Stomach (tissue), 19 donors: ENCODE measurements at regions of chr10 and their contacts with region 1.

Region 1: GRCh38 chr10:95601116-95601719 is 40.0 kb upstream of the SORBS1 start:
- DNase-seq: peak; percentile 87 to 96
- H3K4me3 ChIP-seq: no peak overlapping the region
- H3K27ac ChIP-seq: peak overlapping the region in 4 of 5 donors; percentile 15 to 88 (median 30)
- H3K4me1 ChIP-seq: peaks cover 0 to 25% (median 5%) of the 10 kb centered on the region in 4 donors
- H3K27me3 ChIP-seq: no peaks in the 10 kb centered on the region
- CTCF ChIP-seq: peak in 6 of 7 experiments; percentile 58 to 99 (median 91)
- EP300 ChIP-seq: no peak
- POLR2A ChIP-seq: no peak

Region 2: GRCh38 chr10:95419399-95419798 is 181.8 kb before region 1 on chr10:
- intact Hi-C with region 1: no loop called
- DNase-seq: no peak
- H3K4me3 ChIP-seq: no peak overlapping the region
- H3K27ac ChIP-seq: peak overlapping the region in 4 of 5 donors; percentile 50 to 95 (median 77)
- H3K4me1 ChIP-seq: peaks cover 14 to 85% (median 49%) of the 10 kb centered on the region in 4 donors
- H3K27me3 ChIP-seq: no peaks in the 10 kb centered on the region
- CTCF ChIP-seq: no peak
- EP300 ChIP-seq: no peak
- POLR2A ChIP-seq: no peak

Region 3: DNA sequence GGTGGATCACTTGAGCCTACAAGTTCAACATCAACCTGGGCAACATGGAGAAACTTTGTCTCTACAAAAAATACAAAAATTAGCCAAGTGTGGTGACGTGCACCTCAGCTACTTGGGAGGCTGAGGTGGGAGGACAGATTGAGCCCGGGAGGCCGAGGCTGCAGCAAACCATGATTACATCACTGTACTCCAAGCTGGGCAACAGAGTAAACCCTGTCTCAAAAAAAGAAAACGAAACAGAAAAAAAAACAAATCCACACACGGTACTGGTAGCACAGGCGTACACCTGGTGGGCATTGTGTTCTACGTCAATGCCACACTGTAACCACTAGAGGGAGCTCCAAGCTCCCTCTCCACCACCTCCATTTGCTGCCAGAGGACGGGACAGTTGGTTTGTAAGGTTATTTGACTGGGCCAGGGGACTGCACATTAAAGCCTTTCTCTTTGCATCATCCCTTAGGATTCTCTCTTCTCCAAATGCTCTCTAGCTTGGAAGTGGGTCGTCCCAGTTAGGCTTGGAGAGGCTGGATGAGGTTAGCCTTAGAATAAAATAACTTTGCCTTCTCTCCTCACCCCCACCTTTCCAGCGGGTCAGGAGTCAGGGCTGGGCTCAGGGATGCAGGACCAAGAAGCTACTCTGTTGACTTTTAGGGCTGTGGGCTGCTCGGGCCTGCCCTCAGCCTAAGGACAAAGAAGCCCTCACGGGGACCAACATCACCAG is 170.8 kb before region 1 on chr10:
- intact Hi-C with region 1: loop called (anchors 5 kb)
- DNase-seq: peak; percentile 65 to 88
- H3K4me3 ChIP-seq: no peak overlapping the region
- H3K27ac ChIP-seq: peak overlapping the region in 4 of 5 donors; percentile 47 to 95 (median 66)
- H3K4me1 ChIP-seq: peaks cover 38 to 95% (median 74%) of the 10 kb centered on the region in 4 donors
- H3K27me3 ChIP-seq: no peaks in the 10 kb centered on the region
- CTCF ChIP-seq: peak in 6 of 7 experiments; percentile 90 to 99 (median 92)
- EP300 ChIP-seq: no peak
- POLR2A ChIP-seq: no peak

Region 4: DNA sequence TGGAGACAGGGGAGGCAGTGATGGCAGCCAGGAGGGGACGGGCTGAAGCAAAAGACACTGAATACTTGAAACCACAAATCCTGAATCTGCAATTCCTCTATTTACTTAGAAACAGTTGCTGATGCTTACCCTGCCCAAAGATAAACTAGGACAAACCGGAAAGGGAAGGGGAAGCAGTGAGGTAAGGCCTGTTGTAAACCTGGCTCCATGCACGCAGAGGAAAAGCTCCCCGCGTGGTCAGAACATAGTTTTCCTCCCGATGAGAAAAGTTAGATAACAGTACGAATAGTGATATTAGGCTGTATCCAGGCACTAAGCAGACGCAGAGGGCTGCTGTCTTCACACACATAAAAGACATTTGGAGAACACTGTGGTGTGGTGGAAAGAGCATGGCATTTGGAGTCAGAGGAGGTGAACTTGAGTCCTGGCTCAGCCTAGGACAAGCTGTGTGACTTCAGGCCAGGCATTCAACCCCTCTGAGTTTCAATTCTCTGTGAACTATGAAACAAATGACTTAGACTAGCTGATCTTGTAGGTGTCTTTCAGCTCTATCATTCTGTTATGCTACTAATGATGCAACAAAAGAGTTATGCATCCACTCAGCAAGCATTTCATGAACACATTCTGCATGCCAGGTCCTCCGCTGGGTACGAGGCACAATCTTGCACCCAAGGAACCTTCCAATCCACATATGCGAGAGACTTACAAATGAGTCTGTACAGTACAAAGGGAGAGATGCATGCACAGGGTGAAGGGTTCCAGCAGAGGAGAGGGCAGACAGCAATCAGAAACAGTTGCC is 120.9 kb before region 1 on chr10:
- intact Hi-C with region 1: no loop called
- DNase-seq: peak in 1 of 2 donors; percentile 79
- H3K4me3 ChIP-seq: no peak overlapping the region
- H3K27ac ChIP-seq: peak overlapping the region; percentile 62 to 95 (median 87)
- H3K4me1 ChIP-seq: peaks cover 58 to 94% (median 79%) of the 10 kb centered on the region in 4 donors
- H3K27me3 ChIP-seq: no peaks in the 10 kb centered on the region
- CTCF ChIP-seq: no peak
- EP300 ChIP-seq: peak; percentile 66
- POLR2A ChIP-seq: no peak